Activated T-helper 1 cell treated with anti-CD3 and anti-CD28 coated beads, Interleukin-12 subunit alpha, Interleukin-12 subunit beta, Interleukin-2, Interleukin-4 antibody, amounts not matched to agents 30 ng/mL and 10 ng/mL and 1 ng/mL, durations not matched to agents 14 hours and 24 hours and 36 hours (primary cell): ENCODE measurements at regions of chr9 and their contacts with region 1.

Region 1: DNA sequence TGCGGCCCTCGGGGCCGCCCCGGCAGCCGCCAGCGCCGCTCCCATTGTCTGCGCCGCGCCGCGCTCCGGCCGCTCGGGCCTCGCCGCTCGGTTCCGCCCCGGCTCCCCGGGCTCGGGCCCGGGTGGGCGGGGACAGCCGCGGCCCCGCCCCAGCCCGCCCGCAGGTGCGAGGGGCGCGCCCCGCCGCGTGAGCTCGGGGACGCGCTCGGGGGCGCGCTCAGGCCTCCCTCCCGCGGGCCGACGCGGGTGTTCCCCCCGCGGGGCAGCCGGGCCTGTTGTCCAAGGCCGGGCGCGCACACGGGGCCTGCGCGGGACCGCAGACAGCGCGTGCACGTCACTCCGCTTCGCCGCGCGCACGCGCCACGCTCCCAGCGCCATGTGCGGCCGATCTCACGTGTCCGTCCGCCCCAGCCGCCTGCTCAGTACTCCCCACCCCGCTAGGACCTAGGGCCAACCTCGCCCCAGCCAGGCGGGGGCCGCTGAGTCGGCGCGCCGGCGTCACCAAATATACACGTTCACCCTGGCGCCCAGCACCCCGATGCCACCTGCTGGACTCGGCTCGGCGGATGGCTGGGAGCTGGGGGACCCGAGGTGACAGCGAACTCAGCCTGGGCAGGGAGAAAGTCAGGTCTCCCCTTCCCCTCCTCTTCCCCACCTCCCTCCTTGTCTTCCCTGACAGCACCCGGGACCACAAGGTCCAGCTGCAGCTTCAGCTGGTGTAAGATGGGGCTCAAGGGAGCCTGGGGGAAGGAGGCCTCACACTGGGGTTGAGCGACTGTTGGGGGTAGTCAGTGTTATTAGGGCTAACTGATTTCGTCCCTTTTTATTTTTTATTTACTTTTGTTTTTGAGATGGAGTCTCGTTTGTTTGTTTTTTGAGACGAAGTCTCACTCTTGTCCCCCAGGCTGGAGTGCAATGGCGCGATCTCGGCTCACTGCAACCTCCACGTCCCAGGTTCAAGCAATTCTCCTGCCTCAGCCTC is 14.3 kb downstream of the GBGT1 start:
- DNase-seq: peak; percentile 76
- H3K4me3 Mint-ChIP-seq: peak overlapping the region; percentile 81
- H3K27ac Mint-ChIP-seq: peak overlapping the region; percentile 81
- H3K4me1 Mint-ChIP-seq: peaks cover 31% of the 10 kb centered on the region
- H3K27me3 Mint-ChIP-seq: peaks cover 3% of the 10 kb centered on the region

Region 2: GRCh38 chr9:133030317-133031129 is 118.9 kb before region 1 on chr9 and contains the start of gene GTF3C5:
- intact Hi-C with region 1: loop called (anchors 1 kb)
- DNase-seq: peak; percentile 91
- H3K4me3 Mint-ChIP-seq: peak within 1 kb of the TSS; percentile 96
- H3K27ac Mint-ChIP-seq: peak within 1 kb of the TSS; percentile 97
- H3K4me1 Mint-ChIP-seq: peaks cover 47% of the 10 kb centered on the region
- H3K27me3 Mint-ChIP-seq: no peaks in the 10 kb centered on the region
- total RNA-seq, gene GTF3C5: 87.8 and 89.0 TPM in 2 replicates

Region 3: DNA sequence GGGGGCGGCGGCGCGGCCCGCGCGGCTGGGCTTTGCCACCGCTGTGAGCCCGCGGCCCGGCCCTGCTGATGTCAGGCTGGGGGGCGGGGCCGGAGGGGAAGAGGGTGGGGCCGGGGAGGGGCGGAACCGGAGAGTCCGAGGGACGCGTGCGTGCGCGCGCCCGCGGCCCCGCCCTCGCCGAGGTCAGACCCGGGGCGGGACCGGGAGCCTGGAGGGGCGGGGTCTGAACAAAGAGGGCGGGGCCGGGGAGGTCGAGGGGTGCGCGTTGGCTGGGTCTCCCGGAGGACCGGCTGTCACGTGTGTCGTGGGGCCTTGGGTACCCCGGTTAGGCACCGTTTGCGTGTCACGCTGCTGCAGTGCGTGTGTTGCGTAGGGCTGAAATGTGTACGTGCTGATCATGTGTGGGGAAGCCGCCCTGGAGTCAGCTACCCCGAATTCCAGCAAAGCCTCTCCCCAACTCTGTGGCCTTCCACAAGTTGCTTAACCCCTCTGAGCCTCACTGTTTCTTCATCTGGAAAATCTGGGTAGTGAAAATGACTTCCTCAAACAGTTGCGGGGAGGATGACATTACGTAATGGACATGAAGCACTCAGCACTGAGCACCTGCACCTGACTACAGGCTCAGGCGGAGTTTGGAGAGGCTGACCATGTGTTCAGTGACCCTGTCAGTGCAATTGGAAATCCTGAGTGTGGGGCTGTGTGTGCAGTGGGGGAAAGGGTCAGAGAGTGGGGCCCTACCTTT is 28.0 kb before region 1 on chr9 and contains the start of gene RALGDS:
- intact Hi-C with region 1: loop called (anchors 1 kb)
- DNase-seq: peak; percentile 84
- H3K4me3 Mint-ChIP-seq: peak within 1 kb of the TSS; percentile 86
- H3K27ac Mint-ChIP-seq: peak within 1 kb of the TSS; percentile 94
- H3K4me1 Mint-ChIP-seq: peaks cover 61% of the 10 kb centered on the region
- H3K27me3 Mint-ChIP-seq: no peaks in the 10 kb centered on the region
- total RNA-seq, gene RALGDS: 88.7 and 94.4 TPM in 2 replicates

Region 4: GRCh38 chr9:133160742-133161546 is 11.5 kb after region 1 on chr9:
- intact Hi-C with region 1: loop called (anchors 1 kb)
- DNase-seq: no peak
- H3K4me3 Mint-ChIP-seq: peak overlapping the region; percentile 70
- H3K27ac Mint-ChIP-seq: no peak overlapping the region
- H3K4me1 Mint-ChIP-seq: peaks cover 5% of the 10 kb centered on the region
- H3K27me3 Mint-ChIP-seq: peaks cover 5% of the 10 kb centered on the region